Adrenal gland (tissue), 19 donors: ENCODE measurements at regions of chr6 and their contacts with region 1.

Region 1: DNA sequence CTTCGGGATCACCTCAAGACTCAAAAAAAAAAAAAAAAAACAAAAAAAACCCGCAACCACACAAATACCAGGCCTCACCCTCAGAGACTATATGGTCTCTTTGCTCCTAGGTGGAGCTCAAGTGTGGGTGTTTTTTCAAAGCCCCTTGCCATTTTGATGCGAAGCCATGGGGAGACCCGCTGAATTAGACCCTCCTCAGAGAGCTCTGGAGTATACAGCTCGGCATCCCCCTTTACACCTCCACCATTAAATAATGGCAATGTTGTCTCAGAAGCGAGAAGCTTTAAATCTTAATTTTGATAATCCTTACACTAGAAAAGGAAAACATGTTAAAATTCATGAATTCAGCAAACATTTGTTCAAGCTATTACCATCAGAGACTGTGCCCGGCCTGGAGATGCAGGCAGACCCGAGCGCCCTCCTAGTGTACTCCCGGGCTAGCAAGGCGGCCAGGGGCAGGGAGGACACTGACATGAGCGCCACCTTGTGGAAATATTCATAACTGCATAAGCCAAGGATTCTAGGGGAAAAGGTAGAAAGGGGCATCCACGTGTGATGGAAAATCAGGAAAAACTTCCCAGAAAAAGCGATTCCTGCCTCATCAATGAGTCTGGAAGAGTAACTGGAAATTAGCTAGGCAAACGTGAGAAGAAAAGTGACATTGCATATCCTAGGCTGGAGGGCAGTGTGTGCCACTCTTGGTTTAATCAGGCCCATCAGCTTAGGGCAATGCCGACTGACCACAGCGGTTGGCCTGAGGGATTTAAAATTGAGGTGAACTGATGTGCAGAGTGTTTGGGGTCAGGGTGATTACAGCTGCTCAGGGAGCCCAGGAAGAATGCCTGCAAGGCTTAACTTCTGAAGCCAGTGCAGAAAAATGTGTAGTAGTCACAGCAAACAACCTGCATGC is 72.5 kb downstream of the B3GAT2 start:
- DNase-seq: peak; percentile 44 to 78 (median 67)
- H3K4me3 ChIP-seq: no peak overlapping the region
- H3K27ac ChIP-seq: no peak overlapping the region
- H3K4me1 ChIP-seq: no peaks in the 10 kb centered on the region
- H3K27me3 ChIP-seq: no peaks in the 10 kb centered on the region
- CTCF ChIP-seq: peak; percentile 88 to 98 (median 91)
- POLR2A ChIP-seq: no peak

Region 2: DNA sequence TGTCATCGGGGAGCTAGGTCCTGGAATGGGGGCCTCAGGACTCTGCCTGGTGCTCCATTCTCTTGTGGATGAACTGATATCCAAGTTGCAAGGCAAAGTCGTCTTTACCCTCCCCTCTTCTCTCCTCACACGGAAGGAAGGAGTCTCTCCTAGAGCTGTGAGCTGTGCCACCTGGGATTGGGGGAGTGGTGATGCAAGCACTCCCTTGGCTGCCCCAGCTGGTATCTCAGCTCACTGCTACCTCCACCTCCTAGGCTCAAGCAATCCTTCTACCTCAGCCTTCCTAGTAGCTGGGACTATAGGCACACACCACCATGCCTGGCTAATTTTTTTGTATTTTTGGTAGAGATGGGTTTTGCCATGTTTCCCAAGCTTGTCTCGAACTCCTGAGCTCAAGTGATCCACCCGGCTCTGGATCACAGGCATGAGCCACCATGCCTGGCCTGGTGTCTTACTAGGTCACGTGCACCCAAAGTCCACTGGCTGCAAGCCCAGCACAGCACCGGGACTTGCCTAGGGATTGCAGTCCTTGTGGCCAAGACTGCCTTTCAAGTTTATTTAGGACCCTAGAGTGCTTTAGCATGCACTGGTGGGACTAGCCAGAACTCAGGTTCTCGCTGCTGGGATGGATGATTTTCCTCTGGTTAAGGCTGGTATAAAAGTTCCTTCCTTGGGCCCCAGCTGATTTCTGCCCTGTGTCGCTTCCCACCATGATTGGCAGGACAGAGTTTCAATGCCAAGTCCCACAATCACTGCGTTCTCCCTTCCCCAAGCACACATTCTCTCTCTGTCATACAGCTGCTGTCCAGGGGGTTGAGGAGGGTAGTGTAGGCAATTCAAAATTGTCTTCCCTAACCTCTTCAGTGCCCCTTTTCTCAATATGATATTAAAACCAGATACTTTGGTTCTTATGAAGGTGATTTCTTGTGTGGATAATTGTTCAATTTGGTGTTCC is 183.1 kb before region 1 on chr6:
- intact Hi-C with region 1: loop called (anchors 2 to 5 kb)
- DNase-seq: peak in 5 of 7 donors; percentile 17 to 39 (median 32)
- H3K4me3 ChIP-seq: no peak overlapping the region
- H3K27ac ChIP-seq: no peak overlapping the region
- H3K4me1 ChIP-seq: no peaks in the 10 kb centered on the region
- H3K27me3 ChIP-seq: no peaks in the 10 kb centered on the region
- CTCF ChIP-seq: no peak
- POLR2A ChIP-seq: no peak

Region 3: DNA sequence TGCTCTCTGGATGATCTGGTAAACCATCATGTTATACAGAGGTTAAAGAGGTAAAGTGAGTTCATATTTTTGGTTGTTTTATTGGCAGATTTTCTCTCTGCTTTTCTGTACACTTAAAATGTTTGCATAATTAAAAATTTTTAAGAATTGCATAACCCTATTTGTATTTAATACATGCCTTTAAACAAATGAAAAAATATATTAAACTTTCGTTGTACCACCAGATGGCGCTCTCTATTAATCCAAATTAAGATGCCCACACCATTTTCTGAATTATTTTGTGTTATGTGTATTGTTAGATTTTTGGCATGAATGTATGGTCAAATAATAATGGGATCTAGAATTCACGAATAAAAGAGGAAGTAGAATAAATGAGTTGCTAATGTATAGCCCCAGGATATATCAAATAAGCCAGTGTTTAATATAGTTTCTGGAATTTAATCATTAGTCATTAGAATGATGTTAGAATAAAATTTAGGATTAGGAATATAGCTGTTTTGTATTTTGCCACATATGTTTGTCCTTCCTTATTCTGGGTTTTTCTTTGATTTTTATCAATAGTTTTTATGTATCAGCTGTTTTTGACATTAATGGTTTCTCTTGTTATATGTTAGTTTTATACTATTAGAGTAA is 177.7 kb before region 1 on chr6:
- intact Hi-C with region 1: loop called (anchors 2 to 5 kb)
- DNase-seq: no peak
- H3K4me3 ChIP-seq: no peak overlapping the region
- H3K27ac ChIP-seq: no peak overlapping the region
- H3K4me1 ChIP-seq: peaks cover 0 to 9% of the 10 kb centered on the region in 2 donors
- H3K27me3 ChIP-seq: no peaks in the 10 kb centered on the region
- CTCF ChIP-seq: peak; percentile 54 to 83 (median 74)
- POLR2A ChIP-seq: no peak